Activated CD4-positive, alpha-beta memory T cell treated with anti-CD3 and anti-CD28 coated beads for 36 hours (primary cell): ENCODE measurements at regions of chr13 and their contacts with region 1.

Region 1: GRCh38 chr13:73835138-73835721 is 299.0 kb downstream of the KLF12 start:
- DNase-seq: no peak
- H3K4me3 Mint-ChIP-seq: no peak overlapping the region
- H3K27ac Mint-ChIP-seq: no peak overlapping the region
- H3K4me1 Mint-ChIP-seq: peaks cover 37% of the 10 kb centered on the region
- H3K27me3 Mint-ChIP-seq: no peaks in the 10 kb centered on the region

Region 2: DNA sequence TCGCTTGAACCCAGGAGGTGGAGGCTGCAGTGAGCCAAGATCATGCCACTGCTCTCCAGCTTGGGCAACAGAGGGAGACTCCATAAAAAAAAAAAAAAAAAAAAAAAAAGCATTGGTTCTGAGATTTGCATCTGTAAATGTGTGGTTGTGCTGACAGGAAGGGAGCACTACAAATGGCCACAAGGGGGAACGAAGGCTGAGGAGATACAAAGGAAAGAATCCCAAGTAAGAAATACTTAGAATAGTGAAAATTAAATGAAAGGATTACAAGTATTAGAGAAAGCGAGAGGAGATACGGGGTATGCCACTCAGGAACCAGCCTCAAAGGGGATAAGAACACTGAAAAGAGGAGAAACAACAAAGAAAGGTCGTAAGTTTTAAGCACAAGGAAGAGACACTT is 14.1 kb after region 1 on chr13:
- CTCF ChIA-PET with region 1: interaction called, 14 read pairs
- POLR2A ChIA-PET with region 1: no interaction called
- intact Hi-C with region 1: no loop called
- DNase-seq: peak; percentile 22
- H3K4me3 Mint-ChIP-seq: no peak overlapping the region
- H3K27ac Mint-ChIP-seq: no peak overlapping the region
- H3K4me1 Mint-ChIP-seq: peaks cover 35% of the 10 kb centered on the region
- H3K27me3 Mint-ChIP-seq: no peaks in the 10 kb centered on the region

Region 3: DNA sequence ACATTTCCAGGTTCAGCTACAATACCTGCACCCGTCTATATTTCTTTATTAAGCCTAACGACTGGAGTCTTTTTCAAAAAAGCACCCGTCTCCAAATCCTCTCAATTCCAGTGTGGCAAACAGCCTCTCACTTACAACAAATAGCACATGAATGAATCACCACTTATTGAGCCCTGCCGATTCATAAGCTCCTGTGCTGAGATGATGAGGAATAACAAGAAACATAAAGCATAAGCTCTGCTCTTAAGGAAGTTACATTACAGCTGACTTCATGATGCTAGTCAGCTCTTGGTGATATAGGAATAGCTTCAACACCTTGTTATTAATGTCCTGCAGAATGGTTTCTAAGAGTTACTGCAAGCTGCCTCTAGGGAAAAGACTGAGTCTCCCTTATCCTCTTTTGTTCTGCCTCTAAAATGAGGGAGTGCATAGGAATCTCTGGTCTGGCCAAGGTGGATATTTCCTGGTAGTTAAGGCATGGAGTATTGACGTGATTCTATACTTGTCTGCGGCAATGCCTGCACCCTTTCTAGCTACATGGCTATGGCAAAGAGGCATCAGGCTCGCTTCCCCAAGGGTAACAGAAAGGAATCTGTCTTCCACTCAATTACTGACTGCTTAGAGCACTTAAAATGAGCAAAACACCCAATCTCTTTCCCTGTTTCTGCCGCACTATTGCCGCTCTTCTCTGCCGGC is 103.3 kb after region 1 on chr13:
- CTCF ChIA-PET with region 1: no interaction called
- POLR2A ChIA-PET with region 1: no interaction called
- intact Hi-C with region 1: no loop called
- DNase-seq: no peak
- H3K4me3 Mint-ChIP-seq: no peak overlapping the region
- H3K27ac Mint-ChIP-seq: no peak overlapping the region
- H3K4me1 Mint-ChIP-seq: peaks cover 77% of the 10 kb centered on the region
- H3K27me3 Mint-ChIP-seq: no peaks in the 10 kb centered on the region

Region 4: GRCh38 chr13:73998631-73999030 is 163.4 kb after region 1 on chr13:
- CTCF ChIA-PET with region 1: interaction called, 4 read pairs
- POLR2A ChIA-PET with region 1: no interaction called
- intact Hi-C with region 1: loop called (anchors 5 kb)
- DNase-seq: no peak
- H3K4me3 Mint-ChIP-seq: no peak overlapping the region
- H3K27ac Mint-ChIP-seq: peak overlapping the region; percentile 45
- H3K4me1 Mint-ChIP-seq: peaks cover 52% of the 10 kb centered on the region
- H3K27me3 Mint-ChIP-seq: no peaks in the 10 kb centered on the region

Region 5: DNA sequence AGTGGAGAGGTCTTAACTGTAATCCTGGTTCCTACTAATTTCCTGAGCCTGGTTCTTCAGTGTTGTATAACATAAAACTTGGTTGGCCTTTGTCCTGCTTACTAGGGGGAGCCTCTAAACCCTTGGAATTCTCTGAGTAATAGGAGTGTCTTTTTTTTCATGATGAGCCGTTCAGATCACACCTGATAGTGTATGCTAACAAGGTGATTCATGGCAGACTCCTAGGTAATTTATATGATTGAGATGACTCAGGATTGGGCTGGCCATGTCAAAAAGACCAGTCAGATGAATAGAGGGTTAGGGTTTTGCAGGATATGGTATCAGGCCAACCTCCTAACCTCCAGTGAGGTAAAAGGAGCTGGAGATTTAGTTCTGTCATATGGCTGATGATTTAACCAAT is 434.8 kb after region 1 on chr13:
- CTCF ChIA-PET with region 1: no interaction called
- POLR2A ChIA-PET with region 1: no interaction called
- intact Hi-C with region 1: no loop called
- DNase-seq: no peak
- H3K4me3 Mint-ChIP-seq: no peak overlapping the region
- H3K27ac Mint-ChIP-seq: no peak overlapping the region
- H3K4me1 Mint-ChIP-seq: peaks cover 28% of the 10 kb centered on the region
- H3K27me3 Mint-ChIP-seq: no peaks in the 10 kb centered on the region